Activated naive CD4-positive, alpha-beta T cell treated with anti-CD3 and anti-CD28 coated beads for 36 hours (primary cell): ENCODE measurements at regions of chr7 and their contacts with region 1.

Region 1: GRCh38 chr7:149090397-149091195 is at the start of gene ZNF786:
- DNase-seq: peak; percentile 94
- H3K4me3 Mint-ChIP-seq: peak within 1 kb of the TSS; percentile 90
- H3K27ac Mint-ChIP-seq: peak within 1 kb of the TSS; percentile 99
- H3K4me1 Mint-ChIP-seq: peaks cover 20% of the 10 kb centered on the region
- H3K27me3 Mint-ChIP-seq: no peaks in the 10 kb centered on the region
- total RNA-seq, gene ZNF786: 2.1 to 2.2 TPM

Region 2: DNA sequence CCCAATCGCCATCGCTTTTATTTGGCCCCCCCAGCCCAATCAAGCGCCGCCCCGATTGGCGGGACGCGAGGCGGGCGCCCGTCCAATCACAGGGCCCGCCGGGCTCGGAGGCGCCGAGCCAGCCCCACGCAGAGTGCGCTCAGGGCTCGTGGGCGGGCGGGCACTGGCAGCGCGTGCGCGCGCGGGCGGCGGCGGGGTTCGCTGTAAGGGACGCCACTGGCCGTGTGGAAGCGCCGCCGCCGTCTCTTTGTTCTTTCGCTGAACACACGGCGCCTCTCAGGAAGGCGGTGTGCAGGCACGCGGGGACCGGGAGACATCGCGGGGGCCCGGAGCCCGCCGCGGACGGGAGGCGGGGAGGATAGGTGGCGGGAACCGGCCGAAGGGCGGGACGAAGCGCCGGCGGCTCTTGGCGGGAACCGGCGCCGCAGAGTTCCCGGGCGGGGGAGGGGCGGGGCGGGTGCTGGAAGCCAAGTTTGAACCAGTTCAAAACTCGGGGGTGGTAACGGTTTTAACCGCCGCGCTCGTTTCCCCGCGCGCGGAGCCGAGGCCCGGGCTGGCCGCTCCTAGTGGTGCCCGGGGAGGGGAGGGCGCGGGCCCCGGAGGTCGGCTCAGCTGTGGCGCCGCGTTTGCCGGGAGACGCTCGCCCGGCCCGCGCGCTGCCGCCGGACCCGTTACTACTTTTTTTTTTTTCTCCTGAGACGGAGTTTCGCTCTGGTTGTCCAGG is 206.1 kb before region 1 on chr7:
- CTCF ChIA-PET with region 1: no interaction called
- intact Hi-C with region 1: loop called (anchors 2 kb)
- DNase-seq: peak; percentile 93
- H3K4me3 Mint-ChIP-seq: peak overlapping the region; percentile 94
- H3K27ac Mint-ChIP-seq: peak overlapping the region; percentile 99
- H3K4me1 Mint-ChIP-seq: peaks cover 37% of the 10 kb centered on the region
- H3K27me3 Mint-ChIP-seq: no peaks in the 10 kb centered on the region

Region 3: GRCh38 chr7:148905093-148905666 is 185.4 kb before region 1 on chr7:
- CTCF ChIA-PET with region 1: no interaction called
- intact Hi-C with region 1: no loop called
- DNase-seq: no peak
- H3K4me3 Mint-ChIP-seq: no peak overlapping the region
- H3K27ac Mint-ChIP-seq: no peak overlapping the region
- H3K4me1 Mint-ChIP-seq: peaks cover 34% of the 10 kb centered on the region
- H3K27me3 Mint-ChIP-seq: no peaks in the 10 kb centered on the region

Region 4: DNA sequence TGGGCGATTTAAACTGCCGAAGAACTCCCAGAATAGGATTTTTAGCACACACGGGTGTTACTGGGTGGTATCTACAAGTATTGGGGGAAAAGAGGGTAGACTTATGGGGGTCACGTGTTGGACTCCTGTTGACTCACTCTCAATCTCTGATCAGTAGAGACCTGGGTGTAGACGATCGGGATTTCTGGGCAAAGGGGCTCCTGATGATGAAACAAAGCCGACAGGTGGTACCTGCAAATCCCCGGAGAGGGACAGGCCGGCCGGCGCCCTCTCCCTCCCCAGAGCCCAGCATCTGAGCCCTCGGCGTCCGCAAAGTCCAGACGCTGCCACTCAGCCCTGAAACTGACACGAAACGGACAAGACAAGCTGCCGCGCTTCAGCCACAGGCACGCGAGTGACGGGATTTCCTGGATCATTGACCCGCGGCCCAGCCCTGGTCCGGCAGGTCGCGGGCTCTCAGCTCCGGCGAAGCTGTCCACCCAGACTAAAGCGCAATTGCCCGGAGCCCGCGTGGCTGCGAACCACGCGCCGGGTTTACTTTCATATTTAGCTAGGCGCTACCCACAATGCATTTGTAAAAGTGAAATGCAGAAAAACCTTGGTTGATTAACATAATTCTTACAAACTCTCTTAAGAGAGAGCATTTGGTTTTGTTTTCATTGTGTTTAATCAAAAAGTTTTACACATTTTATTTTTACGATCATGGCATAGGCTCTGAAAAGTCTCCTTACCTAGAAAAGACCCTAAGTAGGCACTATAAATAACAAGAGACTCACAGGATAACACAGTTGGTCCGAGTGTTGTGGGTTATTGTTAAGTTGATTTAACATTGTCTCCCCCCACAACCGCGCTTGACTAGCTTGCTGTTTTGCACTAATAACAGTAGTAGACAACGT is 149.6 kb before region 1 on chr7:
- CTCF ChIA-PET with region 1: no interaction called
- intact Hi-C with region 1: loop called (anchors 1 kb)
- DNase-seq: peak; percentile 68
- H3K4me3 Mint-ChIP-seq: peak overlapping the region; percentile 94
- H3K27ac Mint-ChIP-seq: peak overlapping the region; percentile 98
- H3K4me1 Mint-ChIP-seq: peaks cover 15% of the 10 kb centered on the region
- H3K27me3 Mint-ChIP-seq: no peaks in the 10 kb centered on the region

Region 5: GRCh38 chr7:149005241-149006050 is 85.2 kb before region 1 on chr7:
- CTCF ChIA-PET with region 1: interaction called, 11 read pairs
- intact Hi-C with region 1: loop called (anchors 1 kb)
- DNase-seq: peak; percentile 88
- H3K4me3 Mint-ChIP-seq: no peak overlapping the region
- H3K27ac Mint-ChIP-seq: no peak overlapping the region
- H3K4me1 Mint-ChIP-seq: peaks cover 3% of the 10 kb centered on the region
- H3K27me3 Mint-ChIP-seq: no peaks in the 10 kb centered on the region

Region 6: GRCh38 chr7:149147072-149147751 is 56.6 kb after region 1 on chr7 and contains the start of gene ZNF398:
- CTCF ChIA-PET with region 1: interaction called, 5 read pairs
- intact Hi-C with region 1: loop called (anchors 1 kb)
- DNase-seq: peak; percentile 73
- H3K4me3 Mint-ChIP-seq: peak within 1 kb of the TSS; percentile 87
- H3K27ac Mint-ChIP-seq: peak within 1 kb of the TSS; percentile 91
- H3K4me1 Mint-ChIP-seq: peaks cover 33% of the 10 kb centered on the region
- H3K27me3 Mint-ChIP-seq: no peaks in the 10 kb centered on the region
- total RNA-seq, gene ZNF398: 4.3 to 5.0 TPM

Region 7: DNA sequence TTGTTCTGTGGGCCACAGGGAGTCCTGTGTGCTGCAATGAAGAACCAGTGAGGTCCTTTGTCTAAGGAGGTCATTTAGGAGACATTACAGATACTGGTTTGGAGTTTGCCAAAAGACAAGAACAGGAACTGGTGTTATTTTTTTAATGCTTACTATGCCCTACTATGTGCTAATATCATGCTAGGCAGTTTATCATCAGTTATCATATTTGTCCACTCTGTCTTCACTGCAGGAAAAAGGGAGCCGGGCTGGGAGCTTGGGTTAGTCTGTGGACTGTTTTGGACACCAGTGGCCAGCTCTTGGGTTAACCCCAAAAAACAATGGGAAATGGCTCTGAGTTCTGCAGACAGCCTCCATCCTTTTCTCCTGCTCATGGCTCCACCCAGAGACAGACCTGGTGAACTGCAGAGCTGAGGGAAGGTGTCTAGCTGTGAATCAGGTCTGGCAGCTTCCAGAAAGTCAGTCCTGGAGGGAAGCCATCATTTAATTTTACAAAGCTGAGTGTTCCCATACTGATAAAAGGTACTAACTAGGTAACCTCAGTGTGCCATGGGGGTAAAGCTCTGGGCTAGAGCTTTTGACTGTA is 508.2 kb after region 1 on chr7:
- CTCF ChIA-PET with region 1: no interaction called
- intact Hi-C with region 1: loop called (anchors 1 kb)
- DNase-seq: peak; percentile 69
- H3K4me3 Mint-ChIP-seq: no peak overlapping the region
- H3K27ac Mint-ChIP-seq: peak overlapping the region; percentile 51
- H3K4me1 Mint-ChIP-seq: peaks cover 36% of the 10 kb centered on the region
- H3K27me3 Mint-ChIP-seq: no peaks in the 10 kb centered on the region